ENCODE measurements at regions of chr1 and their contacts with region 1.

Region 1: DNA sequence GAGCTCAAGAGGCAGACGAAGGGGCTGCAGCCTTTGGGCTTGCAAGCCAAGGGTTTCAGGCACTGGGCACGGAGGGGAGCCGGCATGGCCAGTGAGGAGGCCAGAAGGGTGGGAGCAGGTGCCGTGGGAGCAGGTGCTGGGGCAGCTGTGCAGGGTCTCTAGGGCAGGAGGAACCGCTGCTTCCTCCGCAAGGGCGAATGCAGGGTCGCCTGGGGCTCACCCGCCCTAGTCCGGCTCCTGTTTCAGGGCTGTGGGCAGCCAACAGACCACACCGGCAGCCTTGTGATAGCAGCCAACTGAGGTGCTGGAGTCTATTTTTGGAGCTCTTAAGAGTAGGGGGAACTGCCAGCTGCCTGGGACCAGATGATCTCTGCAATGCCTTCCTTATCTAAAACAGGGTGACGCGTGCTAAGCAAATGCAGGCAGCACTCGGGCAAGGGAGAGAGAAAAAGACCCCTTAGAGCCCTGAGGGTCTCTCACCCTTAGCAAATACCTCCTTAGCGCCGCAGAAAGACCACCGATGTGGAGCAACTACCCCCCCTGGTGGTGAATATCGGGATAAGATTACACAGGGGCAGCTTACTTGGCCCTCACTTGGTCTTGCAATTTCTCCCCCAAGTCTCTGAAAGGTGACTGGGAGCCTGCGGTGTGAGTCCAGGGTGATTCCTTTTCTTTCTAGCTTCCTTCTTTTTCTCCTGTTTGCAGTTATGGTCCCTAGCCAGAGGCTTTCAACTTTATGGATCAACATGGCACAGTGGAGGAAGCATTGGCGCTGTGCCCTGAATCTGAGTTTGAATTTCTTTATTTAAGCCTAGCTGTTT is 20.7 kb upstream of the MAPKAPK2 start:
- DNase-seq: peak; percentile 82
- H3K4me3 Mint-ChIP-seq: no peak overlapping the region
- H3K27ac Mint-ChIP-seq: no peak overlapping the region
- H3K4me1 Mint-ChIP-seq: no peaks in the 10 kb centered on the region
- H3K27me3 Mint-ChIP-seq: peaks cover 76% of the 10 kb centered on the region
- CTCF ChIP-seq: peak; percentile 90

Region 2: GRCh38 chr1:206479183-206480125 is 184.6 kb before region 1 on chr1:
- CTCF ChIA-PET with region 1: interaction called, 5 read pairs
- intact Hi-C with region 1: loop called (anchors 5 kb)
- DNase-seq: peak; percentile 73
- H3K4me3 Mint-ChIP-seq: no peak overlapping the region
- H3K27ac Mint-ChIP-seq: no peak overlapping the region
- H3K4me1 Mint-ChIP-seq: peaks cover 23% of the 10 kb centered on the region
- H3K27me3 Mint-ChIP-seq: no peaks in the 10 kb centered on the region
- CTCF ChIP-seq: peak; percentile 81

Region 3: DNA sequence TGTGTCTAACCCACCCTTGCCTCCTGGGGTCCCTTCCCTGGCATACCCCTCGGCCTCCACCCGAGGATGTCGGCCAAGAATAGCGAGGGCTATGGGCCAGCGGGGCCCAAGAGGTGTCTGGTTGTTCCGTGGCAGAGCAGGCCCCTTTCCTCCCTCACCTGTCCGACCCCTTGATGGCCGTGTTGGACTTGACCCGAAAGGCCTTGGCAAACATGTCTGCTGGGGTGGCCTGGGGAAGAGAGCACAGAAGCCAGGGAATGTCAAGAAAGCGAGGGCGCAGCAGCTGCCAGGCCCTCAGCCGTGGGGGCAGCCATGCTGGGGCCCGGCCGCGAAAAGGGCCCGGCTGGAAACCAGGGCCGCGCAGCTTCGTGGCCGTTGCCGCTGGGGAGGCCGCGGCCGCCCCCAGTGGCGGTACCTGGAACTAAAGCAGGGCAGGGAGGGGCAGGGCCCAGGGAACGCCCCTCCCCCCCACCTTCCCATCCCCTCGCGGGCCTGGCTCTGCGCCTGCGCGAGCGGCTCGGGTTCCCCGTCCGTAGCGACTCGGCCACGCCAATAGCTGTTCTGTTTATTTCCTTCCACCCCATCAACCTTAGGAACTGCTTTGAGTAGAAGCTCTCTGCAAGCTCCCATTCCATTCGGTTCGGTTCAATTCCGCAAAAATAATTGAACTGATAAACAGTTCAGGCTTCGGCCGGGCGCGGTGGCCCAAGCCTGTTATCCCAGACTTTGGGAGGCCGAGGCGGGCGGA is 51.7 kb before region 1 on chr1 and contains the start of gene EIF2D:
- CTCF ChIA-PET with region 1: interaction called, 11 read pairs
- intact Hi-C with region 1: loop called (anchors 1 kb)
- DNase-seq: peak; percentile 99
- H3K4me3 Mint-ChIP-seq: peak within 1 kb of the TSS; percentile 89
- H3K27ac Mint-ChIP-seq: peak within 1 kb of the TSS; percentile 93
- H3K4me1 Mint-ChIP-seq: peaks cover 18% of the 10 kb centered on the region
- H3K27me3 Mint-ChIP-seq: peaks cover 20% of the 10 kb centered on the region
- CTCF ChIP-seq: peak; percentile 97
- total RNA-seq, gene EIF2D: 41.8 and 45.1 TPM in 2 replicates

Region 4: GRCh38 chr1:206674745-206675175 is 10.7 kb after region 1 on chr1:
- CTCF ChIA-PET with region 1: interaction called, 18 read pairs
- intact Hi-C with region 1: no loop called
- DNase-seq: peak; percentile 77
- H3K4me3 Mint-ChIP-seq: no peak overlapping the region
- H3K27ac Mint-ChIP-seq: peak overlapping the region; percentile 65
- H3K4me1 Mint-ChIP-seq: peaks cover 15% of the 10 kb centered on the region
- H3K27me3 Mint-ChIP-seq: peaks cover 5% of the 10 kb centered on the region
- CTCF ChIP-seq: no peak

Measured in Calu3 (cell line).